Activated CD4-positive, alpha-beta T cell treated with anti-CD3 and anti-CD28 coated beads for 36 hours (primary cell): ENCODE measurements at regions of chr12 and their contacts with region 1.

Region 1: DNA sequence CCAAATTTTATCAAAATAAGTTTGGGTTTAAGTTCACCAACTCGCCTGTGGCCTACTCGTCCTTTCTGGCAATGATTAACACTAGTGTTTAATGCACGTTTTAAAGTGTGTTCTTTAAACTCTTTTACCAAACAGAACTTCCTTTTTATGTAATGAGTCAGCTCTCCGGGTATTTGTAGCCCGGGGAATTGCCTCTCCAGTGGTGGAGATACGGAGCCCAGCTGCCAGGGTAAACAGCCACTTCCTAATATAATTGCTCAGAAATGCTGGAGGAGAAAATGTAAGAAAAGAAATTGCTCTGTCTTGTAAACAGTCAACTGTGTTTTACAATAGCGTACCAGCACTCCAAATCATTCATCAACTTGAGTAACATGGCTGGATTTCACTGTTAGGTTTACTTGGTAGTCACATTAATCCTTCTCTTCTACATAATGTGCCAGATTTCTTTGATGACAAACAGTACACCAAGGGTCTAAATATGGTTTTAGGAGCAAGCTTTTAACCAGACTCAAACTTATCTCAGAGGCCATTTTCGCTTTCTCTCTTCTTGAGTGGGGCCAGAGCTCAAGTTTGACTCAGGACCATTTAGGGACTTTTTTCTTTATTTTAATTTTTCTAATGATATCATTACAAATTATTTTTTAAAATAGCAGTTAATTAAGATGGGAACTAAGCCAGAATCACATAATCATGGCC is 101.2 kb upstream of the SLC38A2 start:
- DNase-seq: no peak
- ATAC-seq: no peak
- H3K4me3 Mint-ChIP-seq: no peak overlapping the region
- H3K27ac Mint-ChIP-seq: peak overlapping the region; percentile 69
- H3K4me1 Mint-ChIP-seq: peaks cover 19% of the 10 kb centered on the region
- H3K27me3 Mint-ChIP-seq: no peaks in the 10 kb centered on the region

Region 2: GRCh38 chr12:45290204-45290580 is 1183.6 kb before region 1 on chr12:
- CTCF ChIA-PET with region 1: no interaction called
- POLR2A ChIA-PET with region 1: no interaction called
- intact Hi-C with region 1: loop called in 1 of 2 experiments (anchors 5 kb)
- DNase-seq: no peak
- ATAC-seq: no peak
- H3K4me3 Mint-ChIP-seq: no peak overlapping the region
- H3K27ac Mint-ChIP-seq: no peak overlapping the region
- H3K4me1 Mint-ChIP-seq: peaks cover 2% of the 10 kb centered on the region
- H3K27me3 Mint-ChIP-seq: no peaks in the 10 kb centered on the region

Region 3: GRCh38 chr12:46342562-46343033 is 131.2 kb before region 1 on chr12:
- CTCF ChIA-PET with region 1: no interaction called
- POLR2A ChIA-PET with region 1: no interaction called
- intact Hi-C with region 1: no loop called
- DNase-seq: peak; percentile 21
- ATAC-seq: peak; percentile 66
- H3K4me3 Mint-ChIP-seq: no peak overlapping the region
- H3K27ac Mint-ChIP-seq: no peak overlapping the region
- H3K4me1 Mint-ChIP-seq: peaks cover 5% of the 10 kb centered on the region
- H3K27me3 Mint-ChIP-seq: peaks cover 2% of the 10 kb centered on the region